Esophagus squamous epithelium (tissue), 5 donors: ENCODE measurements at regions of chr5 and their contacts with region 1.

Region 1: GRCh38 chr5:128213340-128213739 is 129.8 kb downstream of the SLC12A2 start:
- DNase-seq: no peak
- H3K4me3 ChIP-seq: no peak overlapping the region
- H3K27ac ChIP-seq: no peak overlapping the region
- H3K4me1 ChIP-seq: peaks cover 0 to 5% (median 0%) of the 10 kb centered on the region in 3 donors
- H3K27me3 ChIP-seq: peaks cover 0 to 8% (median 0%) of the 10 kb centered on the region in 4 donors
- CTCF ChIP-seq: peak; percentile 38 to 78 (median 62)
- POLR2A ChIP-seq: no peak

Region 2: GRCh38 chr5:128358826-128359225 is 145.5 kb after region 1 on chr5:
- intact Hi-C with region 1: no loop called
- DNase-seq: no peak
- H3K4me3 ChIP-seq: no peak overlapping the region
- H3K27ac ChIP-seq: no peak overlapping the region
- H3K4me1 ChIP-seq: no peaks in the 10 kb centered on the region
- H3K27me3 ChIP-seq: no peaks in the 10 kb centered on the region
- CTCF ChIP-seq: no peak
- POLR2A ChIP-seq: no peak

Region 3: GRCh38 chr5:128403333-128403732 is 190.0 kb after region 1 on chr5:
- intact Hi-C with region 1: no loop called
- DNase-seq: no peak
- H3K4me3 ChIP-seq: no peak overlapping the region
- H3K27ac ChIP-seq: no peak overlapping the region
- H3K4me1 ChIP-seq: peaks cover 0 to 7% (median 0%) of the 10 kb centered on the region in 3 donors
- H3K27me3 ChIP-seq: no peaks in the 10 kb centered on the region
- CTCF ChIP-seq: no peak
- POLR2A ChIP-seq: no peak

Region 4: DNA sequence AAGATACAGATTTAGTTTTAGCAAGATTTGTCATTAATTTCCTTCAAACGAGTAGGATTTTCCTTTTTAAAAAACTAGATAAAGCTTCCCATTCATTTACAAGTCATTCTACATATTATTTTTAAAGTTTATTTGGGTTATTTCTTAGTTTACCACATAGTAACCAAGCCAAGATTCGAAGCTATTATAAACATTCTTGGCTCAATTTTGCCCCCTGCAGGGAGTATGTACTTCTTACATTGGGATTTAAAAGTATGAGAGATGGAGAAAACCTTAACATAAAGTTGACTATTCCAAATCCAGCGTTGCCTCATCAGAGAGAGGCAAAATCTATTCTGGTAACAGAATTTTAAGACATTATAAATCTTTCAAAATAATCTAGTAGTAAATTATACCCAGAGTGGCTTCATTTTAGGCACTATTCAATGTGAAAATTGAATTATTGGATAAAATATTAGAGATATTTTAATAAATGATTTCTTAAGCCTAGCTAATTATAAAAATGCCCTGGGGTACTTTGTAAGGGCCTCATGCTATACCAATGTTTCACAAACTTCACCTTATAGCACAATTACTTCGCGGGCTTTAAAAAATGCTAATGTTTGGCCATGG is 285.6 kb after region 1 on chr5:
- intact Hi-C with region 1: loop called (anchors 5 kb)
- DNase-seq: no peak
- H3K4me3 ChIP-seq: no peak overlapping the region
- H3K27ac ChIP-seq: no peak overlapping the region
- H3K4me1 ChIP-seq: no peaks in the 10 kb centered on the region
- H3K27me3 ChIP-seq: no peaks in the 10 kb centered on the region
- CTCF ChIP-seq: peak in 3 of 6 experiments; percentile 13 to 55 (median 30)
- POLR2A ChIP-seq: no peak

Region 5: DNA sequence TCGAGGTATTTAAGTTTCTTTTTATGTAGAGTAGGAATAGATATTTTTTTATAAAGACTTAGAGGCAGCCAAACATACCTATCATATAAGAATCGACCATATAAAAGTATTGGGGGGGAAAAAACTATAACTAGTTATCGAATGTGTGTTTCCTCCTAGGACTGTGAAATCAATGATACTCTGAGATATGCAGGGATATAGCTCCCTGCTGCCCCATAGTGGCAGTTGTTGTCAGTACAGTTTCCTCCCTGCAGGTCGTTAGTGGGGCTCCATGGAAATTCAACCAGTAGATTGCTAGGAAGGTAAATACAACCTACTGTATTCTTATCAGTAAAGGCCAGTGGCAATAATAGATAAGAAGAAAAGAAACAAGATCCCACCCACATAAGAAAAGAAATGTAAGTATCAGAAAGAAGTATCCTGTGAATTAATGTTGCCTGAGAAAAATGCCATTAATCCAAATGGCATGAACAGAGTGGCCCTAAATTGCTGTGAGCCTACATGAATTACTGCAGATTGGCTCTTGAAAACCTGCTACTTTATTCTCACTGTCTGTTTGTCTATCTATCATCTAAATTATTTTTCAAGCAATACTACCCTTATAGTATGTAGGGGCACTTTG is 461.6 kb after region 1 on chr5:
- intact Hi-C with region 1: loop called (anchors 10 kb)
- DNase-seq: no peak
- H3K4me3 ChIP-seq: no peak overlapping the region
- H3K27ac ChIP-seq: no peak overlapping the region
- H3K4me1 ChIP-seq: no peaks in the 10 kb centered on the region
- H3K27me3 ChIP-seq: no peaks in the 10 kb centered on the region
- CTCF ChIP-seq: peak in 4 of 6 experiments; percentile 30 to 67 (median 42)
- POLR2A ChIP-seq: no peak